ENCODE measurements at regions of chr17 and their contacts with region 1.

Region 1: DNA sequence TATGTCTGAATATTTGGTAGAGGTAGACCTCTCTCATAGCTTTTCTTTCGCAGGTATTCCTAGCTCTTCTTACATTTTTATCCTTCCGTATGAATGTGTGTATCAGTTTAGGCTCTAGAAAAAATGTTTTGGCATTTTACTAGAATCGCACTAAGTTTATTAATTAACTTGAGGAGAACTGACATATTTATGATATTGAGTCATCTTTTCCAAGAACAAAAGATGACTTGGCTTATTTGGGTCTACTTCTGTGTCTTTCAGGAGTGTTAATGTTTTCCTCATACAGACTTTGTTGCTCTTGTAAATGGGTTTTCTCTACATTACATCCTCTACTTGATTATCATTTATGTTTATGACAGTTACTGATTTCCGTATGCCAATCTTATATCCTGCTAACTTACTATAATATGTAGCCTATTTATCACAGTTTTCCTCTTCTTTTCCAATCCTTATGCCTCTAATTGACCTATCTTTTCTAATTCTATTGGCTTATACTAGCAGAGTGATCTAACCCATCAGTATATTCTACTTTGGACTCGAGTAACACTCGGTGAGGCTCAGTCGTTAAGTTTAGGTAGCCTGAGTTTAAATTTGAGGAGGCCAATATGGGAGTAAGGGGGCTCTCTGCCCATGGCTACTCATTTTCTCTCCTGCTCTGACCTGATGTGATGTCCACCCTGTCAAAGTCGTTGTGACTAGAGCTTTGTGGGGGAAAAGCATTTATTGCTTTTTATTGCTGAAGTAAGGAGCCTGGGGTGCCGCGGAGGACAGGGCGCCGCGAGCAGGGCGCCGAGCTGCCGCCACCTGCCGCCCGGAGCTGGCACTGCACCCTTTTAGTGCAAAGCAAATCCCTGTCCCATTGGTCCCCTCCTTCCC is 20.0 kb downstream of the ST6GALNAC1 start:
- DNase-seq: peak; percentile 79
- H3K4me3 ChIP-seq: peak overlapping the region in 2 of 3 experiments; percentile 10 to 20
- H3K27ac ChIP-seq: peak overlapping the region; percentile 79
- H3K4me1 ChIP-seq: peaks cover 10% of the 10 kb centered on the region
- H3K27me3 ChIP-seq: peaks cover 0 to 2% of the 10 kb centered on the region in 2 experiments
- CTCF ChIP-seq: peak; percentile 96 to 97
- POLR2A ChIP-seq: no peak

Region 2: DNA sequence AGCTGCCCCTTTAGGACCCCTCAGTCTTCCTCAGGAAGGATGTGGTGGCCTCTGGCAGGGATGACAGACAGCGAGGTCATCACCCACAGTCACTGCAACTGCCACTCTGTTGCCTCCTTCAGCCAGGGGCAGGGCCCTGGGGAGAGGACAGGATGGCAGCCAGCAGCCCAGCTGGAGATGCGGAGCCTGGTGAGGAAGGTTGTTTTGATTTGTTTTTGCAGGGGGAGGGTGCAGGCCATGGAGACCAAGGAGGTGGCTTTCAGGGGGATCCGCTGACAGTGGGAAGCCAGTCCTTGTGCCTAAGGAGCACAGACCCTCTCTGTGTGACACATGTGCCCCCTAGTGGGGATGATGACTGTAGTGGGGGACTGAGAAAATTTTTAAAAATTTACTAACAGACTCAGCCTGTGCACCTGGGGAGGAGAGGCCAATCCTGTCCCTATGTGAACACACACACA is 76.3 kb before region 1 on chr17:
- CTCF ChIA-PET with region 1: interaction called, 26 read pairs
- POLR2A ChIA-PET with region 1: no interaction called
- dilution Hi-C with region 1: no loop called
- intact Hi-C with region 1: no loop called
- DNase-seq: peak; percentile 65
- H3K4me3 ChIP-seq: no peak overlapping the region
- H3K27ac ChIP-seq: no peak overlapping the region
- H3K4me1 ChIP-seq: peaks cover 12% of the 10 kb centered on the region
- H3K27me3 ChIP-seq: peaks cover 0 to 3% of the 10 kb centered on the region in 2 experiments
- CTCF ChIP-seq: peak; percentile 58 to 75
- POLR2A ChIP-seq: no peak

Region 3: GRCh38 chr17:76567634-76568432 is 55.7 kb before region 1 on chr17:
- CTCF ChIA-PET with region 1: interaction called, 121 read pairs
- POLR2A ChIA-PET with region 1: no interaction called
- dilution Hi-C with region 1: no loop called
- intact Hi-C with region 1: no loop called
- DNase-seq: no peak
- H3K4me3 ChIP-seq: no peak overlapping the region
- H3K27ac ChIP-seq: no peak overlapping the region
- H3K4me1 ChIP-seq: peaks cover 5% of the 10 kb centered on the region
- H3K27me3 ChIP-seq: no peaks in the 10 kb centered on the region
- CTCF ChIP-seq: no peak
- POLR2A ChIP-seq: no peak

Region 4: DNA sequence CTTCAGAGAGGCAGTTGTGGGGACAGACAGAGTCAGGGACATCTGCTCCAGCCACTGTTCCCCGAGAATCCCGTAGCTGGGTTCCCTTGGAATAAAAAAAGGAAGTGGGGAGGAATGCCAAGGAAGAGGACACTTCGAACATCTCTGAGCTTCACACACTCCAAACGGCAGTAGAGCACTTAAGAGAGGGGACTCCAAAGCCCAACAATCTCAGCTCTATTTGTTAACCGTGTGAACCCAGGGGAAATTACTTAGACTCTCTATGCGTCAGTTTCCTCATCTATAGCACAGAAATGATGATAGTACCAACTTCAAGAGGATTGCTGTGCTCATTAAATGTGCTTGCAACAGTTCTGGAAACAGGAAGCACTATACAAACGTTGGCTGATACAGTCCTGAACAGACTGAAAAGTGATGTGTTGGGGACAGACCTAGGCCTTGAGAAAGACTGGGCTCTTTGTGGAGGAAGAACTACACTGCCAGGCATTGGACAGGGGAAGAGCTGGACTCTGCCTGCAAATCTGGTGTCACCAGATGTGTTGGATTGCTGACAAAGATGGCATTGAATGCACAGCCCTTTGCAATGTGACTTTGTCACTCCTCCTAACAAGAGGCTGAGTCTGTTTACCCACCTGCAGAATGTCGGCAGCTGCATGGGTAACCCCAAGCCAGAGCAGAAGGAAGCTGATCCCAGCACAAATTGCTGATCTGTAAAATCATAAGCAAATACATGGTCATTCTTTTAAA is 25.6 kb before region 1 on chr17:
- CTCF ChIA-PET with region 1: interaction called, 16 read pairs
- POLR2A ChIA-PET with region 1: no interaction called
- dilution Hi-C with region 1: no loop called
- intact Hi-C with region 1: loop called (anchors 1 kb)
- DNase-seq: no peak
- H3K4me3 ChIP-seq: no peak overlapping the region
- H3K27ac ChIP-seq: no peak overlapping the region
- H3K4me1 ChIP-seq: peaks cover 19% of the 10 kb centered on the region
- H3K27me3 ChIP-seq: no peaks in the 10 kb centered on the region
- CTCF ChIP-seq: no peak
- POLR2A ChIP-seq: no peak

Region 5: GRCh38 chr17:76638263-76638662 is 14.8 kb after region 1 on chr17:
- CTCF ChIA-PET with region 1: interaction called, 30 read pairs
- POLR2A ChIA-PET with region 1: no interaction called
- dilution Hi-C with region 1: no loop called
- intact Hi-C with region 1: no loop called
- DNase-seq: no peak
- H3K4me3 ChIP-seq: no peak overlapping the region
- H3K27ac ChIP-seq: no peak overlapping the region
- H3K4me1 ChIP-seq: no peaks in the 10 kb centered on the region
- H3K27me3 ChIP-seq: peaks cover 2 to 3% of the 10 kb centered on the region in 2 experiments
- CTCF ChIP-seq: no peak
- POLR2A ChIP-seq: no peak

Region 6: DNA sequence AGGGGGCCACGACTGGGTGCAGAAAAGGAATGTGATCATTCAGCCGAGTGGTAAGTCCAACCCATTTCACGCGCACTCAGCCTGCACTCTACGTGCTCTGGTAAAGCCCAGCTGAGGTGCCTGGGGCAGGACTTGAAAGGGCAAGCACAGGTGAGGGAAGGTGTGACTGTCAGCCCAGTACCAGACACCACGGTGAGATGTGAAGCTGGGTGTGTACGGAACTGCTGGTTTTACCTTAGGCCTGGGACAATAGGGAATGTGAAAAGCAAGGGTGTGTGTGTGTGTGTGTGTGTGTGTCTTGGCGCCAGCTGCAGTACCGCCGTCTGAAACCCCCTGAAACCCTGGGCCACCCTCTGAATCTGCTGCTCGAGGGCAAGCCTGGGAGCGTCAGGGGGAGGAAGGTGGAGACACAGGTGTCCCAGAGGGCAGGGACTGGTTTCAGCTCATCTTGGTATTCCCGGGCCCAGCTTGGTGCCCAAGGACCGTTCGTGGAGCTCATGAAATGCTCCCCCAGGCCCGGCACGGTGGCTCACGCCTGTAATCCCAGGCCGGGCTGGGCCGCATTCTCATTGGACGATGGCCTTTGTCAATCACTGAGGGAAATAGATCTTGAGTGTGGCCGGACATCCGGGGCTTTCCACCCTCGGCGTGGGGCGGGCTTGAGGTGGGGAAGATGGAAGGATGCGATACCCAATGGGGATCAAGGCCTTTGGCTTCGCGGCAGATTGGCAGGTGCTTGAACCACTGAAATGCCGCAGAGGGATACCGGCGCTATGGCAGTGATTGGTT is 47.8 kb after region 1 on chr17:
- CTCF ChIA-PET with region 1: interaction called, 16 read pairs
- POLR2A ChIA-PET with region 1: no interaction called
- dilution Hi-C with region 1: no loop called
- intact Hi-C with region 1: no loop called
- DNase-seq: peak; percentile 100
- H3K4me3 ChIP-seq: peak overlapping the region in 2 of 3 experiments; percentile 19 to 89
- H3K27ac ChIP-seq: peak overlapping the region; percentile 51
- H3K4me1 ChIP-seq: peaks cover 11% of the 10 kb centered on the region
- H3K27me3 ChIP-seq: peaks cover 0 to 5% of the 10 kb centered on the region in 2 experiments
- CTCF ChIP-seq: no peak
- POLR2A ChIP-seq: peak; percentile 67

Region 7: GRCh38 chr17:76983075-76983775 is 359.7 kb after region 1 on chr17:
- CTCF ChIA-PET with region 1: no interaction called
- POLR2A ChIA-PET with region 1: no interaction called
- dilution Hi-C with region 1: no loop called
- intact Hi-C with region 1: no loop called
- DNase-seq: no peak
- H3K4me3 ChIP-seq: no peak overlapping the region
- H3K27ac ChIP-seq: no peak overlapping the region
- H3K4me1 ChIP-seq: no peaks in the 10 kb centered on the region
- H3K27me3 ChIP-seq: peaks cover 0 to 1% of the 10 kb centered on the region in 2 experiments
- CTCF ChIP-seq: no peak
- POLR2A ChIP-seq: no peak